GM18951 (cell line): ENCODE measurements at regions of chr1 and their contacts with region 1.

Region 1: GRCh38 chr1:197614916-197615692 is 160.2 kb downstream of the DENND1B start:
- POLR2A ChIP-seq: no peak

Region 2: GRCh38 chr1:197675583-197676208 is 60.6 kb after region 1 on chr1:
- in situ Hi-C with region 1: no loop called
- POLR2A ChIP-seq: no peak

Region 3: GRCh38 chr1:197868751-197869489 is 253.8 kb after region 1 on chr1:
- in situ Hi-C with region 1: loop called (anchors 25 kb)
- POLR2A ChIP-seq: no peak